ENCODE measurements at regions of chr16 and their contacts with region 1.

Region 1: GRCh38 chr16:67999985-68000384 is 701 bp upstream of the DPEP2 start:
- DNase-seq: peak in 3 of 14 experiments; percentile 6 to 34 (median 22)
- ATAC-seq: peak; percentile 11
- H3K4me3 ChIP-seq: peak overlapping the region; percentile 61
- H3K4me3 Mint-ChIP-seq: peak overlapping the region; percentile 86
- H3K27ac ChIP-seq: peak overlapping the region; percentile 48 to 83
- H3K27ac Mint-ChIP-seq: peak overlapping the region; percentile 93
- H3K4me1 ChIP-seq: peaks cover 70% of the 10 kb centered on the region
- H3K4me1 Mint-ChIP-seq: peaks cover 55% of the 10 kb centered on the region
- H3K27me3 ChIP-seq: no peaks in the 10 kb centered on the region
- H3K27me3 Mint-ChIP-seq: no peaks in the 10 kb centered on the region
- CTCF ChIP-seq: no peak

Region 2: DNA sequence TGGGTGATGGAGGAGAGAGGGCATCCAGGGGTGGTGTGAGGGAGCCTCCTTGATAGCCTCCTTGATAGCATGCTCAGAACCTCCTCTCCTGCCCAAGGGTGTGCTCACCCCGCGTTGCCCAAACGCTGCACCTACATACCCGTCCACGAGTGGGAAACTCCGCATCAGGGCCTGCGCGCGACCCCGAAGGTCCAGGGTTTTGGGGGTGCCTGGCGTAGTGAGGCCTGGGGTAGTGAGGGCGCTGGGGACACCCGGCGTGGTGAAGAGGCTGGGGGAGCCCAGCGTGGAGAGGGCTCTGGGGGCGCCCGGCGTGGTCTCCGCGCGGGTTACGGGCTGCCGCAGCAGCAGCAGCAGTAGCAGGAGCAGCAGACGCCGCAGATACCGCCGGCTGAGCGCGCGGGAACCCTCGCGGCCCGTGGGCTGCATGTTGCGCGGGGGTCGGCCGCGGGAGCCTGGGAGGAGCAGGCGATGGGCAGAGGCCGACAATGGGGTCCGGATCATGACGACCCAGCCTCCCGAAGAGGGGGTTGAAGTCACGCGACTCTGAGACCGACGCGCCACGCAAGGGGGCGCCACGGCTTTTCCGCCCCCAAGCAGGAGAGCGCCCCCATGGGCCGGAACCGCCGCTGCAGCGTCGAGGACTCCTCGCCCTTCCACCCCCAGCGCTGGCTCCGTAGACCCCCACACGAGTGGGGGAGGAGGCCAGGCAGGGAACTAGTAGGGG is 19.9 kb before region 1 on chr16 and contains the start of gene DPEP3:
- CTCF ChIA-PET with region 1: interaction called, 3 read pairs
- POLR2A ChIA-PET with region 1: interaction called, 27 read pairs
- intact Hi-C with region 1: no loop called
- DNase-seq: peak in 2 of 14 experiments; percentile 31 to 49
- ATAC-seq: no peak
- H3K4me3 ChIP-seq: no peak within 1 kb of the TSS
- H3K4me3 Mint-ChIP-seq: no peak within 1 kb of the TSS
- H3K27ac ChIP-seq: no peak within 1 kb of the TSS
- H3K27ac Mint-ChIP-seq: no peak within 1 kb of the TSS
- H3K4me1 ChIP-seq: peaks cover 23% of the 10 kb centered on the region
- H3K4me1 Mint-ChIP-seq: peaks cover 23% of the 10 kb centered on the region
- H3K27me3 ChIP-seq: no peaks in the 10 kb centered on the region
- H3K27me3 Mint-ChIP-seq: no peaks in the 10 kb centered on the region
- CTCF ChIP-seq: no peak
- total RNA-seq, gene DPEP3: 0.53 to 0.63 TPM

Region 3: DNA sequence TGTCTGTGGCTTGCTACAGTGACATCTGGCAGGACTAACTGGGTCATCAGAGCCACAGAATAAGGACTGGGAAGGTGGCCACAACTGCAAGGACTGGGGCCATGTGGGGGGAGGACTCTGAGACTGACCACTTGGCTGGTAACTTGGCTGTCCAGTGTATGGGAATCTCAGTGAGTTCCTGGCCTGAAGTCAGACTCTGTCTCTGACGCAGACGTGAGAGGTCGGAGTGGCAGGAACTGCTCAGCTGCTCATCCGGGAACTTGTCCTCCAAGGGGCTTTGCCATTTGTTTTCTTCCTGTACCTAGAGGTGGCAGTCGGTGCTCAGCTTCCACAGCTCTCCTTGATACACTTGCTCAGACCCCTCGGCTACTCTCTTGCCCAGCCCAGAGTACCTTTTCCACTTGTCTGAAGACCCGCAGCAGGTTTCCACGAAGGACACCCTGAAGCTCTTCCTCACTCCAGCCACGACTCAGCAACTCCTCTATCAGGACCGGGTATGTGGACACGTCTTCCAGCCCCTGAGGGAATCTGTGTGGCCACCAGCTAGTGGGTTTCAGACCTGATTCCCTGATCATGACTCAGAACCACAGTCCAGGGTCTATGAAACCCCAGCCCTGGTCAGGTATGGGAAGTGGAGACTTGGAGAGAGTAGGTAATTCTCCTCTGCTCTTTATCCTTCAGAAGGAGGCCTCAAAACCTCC is 12.4 kb before region 1 on chr16:
- CTCF ChIA-PET with region 1: interaction called, 3 read pairs
- POLR2A ChIA-PET with region 1: interaction called, 27 read pairs
- intact Hi-C with region 1: no loop called
- DNase-seq: no peak
- ATAC-seq: no peak
- H3K4me3 ChIP-seq: no peak overlapping the region
- H3K4me3 Mint-ChIP-seq: no peak overlapping the region
- H3K27ac ChIP-seq: peak overlapping the region in 1 of 2 donors; percentile 32
- H3K27ac Mint-ChIP-seq: peak overlapping the region; percentile 79
- H3K4me1 ChIP-seq: peaks cover 29% of the 10 kb centered on the region
- H3K4me1 Mint-ChIP-seq: peaks cover 32% of the 10 kb centered on the region
- H3K27me3 ChIP-seq: no peaks in the 10 kb centered on the region
- H3K27me3 Mint-ChIP-seq: no peaks in the 10 kb centered on the region
- CTCF ChIP-seq: no peak

Region 4: DNA sequence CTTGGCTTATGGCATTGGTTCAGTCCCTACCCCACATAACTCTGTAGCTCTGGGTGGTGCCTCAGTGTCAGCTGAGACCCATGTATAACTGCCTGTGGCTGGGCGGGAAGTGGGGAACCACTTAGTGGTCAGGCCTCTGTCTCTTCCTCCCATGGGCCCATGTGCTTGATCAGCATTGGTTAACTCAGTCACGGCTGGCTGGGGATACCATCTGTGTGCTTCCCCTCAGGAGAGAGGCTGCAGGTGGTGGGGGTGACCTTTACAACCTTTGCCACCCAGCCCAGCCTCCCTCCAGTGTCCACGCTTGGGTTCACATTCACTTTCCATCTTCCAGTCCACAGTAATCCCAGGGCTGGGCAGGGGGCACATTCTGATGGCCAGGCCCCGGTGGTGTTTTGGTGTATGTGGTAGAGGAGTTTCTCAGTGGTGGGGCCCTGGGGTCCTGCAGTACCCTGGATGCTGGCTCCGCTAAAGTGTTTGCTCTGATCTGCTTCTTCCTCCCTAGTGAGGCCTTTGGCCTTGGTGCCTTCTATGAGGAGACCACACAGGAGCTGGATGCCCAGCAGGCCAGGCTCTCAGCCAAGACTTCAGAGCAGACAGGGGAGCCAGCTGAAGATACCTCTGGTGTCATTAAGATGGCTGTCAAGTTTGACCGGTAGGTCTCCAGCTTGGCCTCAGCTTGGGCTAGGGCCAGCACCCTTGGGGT is 75.0 kb after region 1 on chr16:
- CTCF ChIA-PET with region 1: no interaction called
- POLR2A ChIA-PET with region 1: interaction called, 11 read pairs
- intact Hi-C with region 1: no loop called
- DNase-seq: peak in 11 of 14 experiments; percentile 24 to 92 (median 48)
- ATAC-seq: peak; percentile 51
- H3K4me3 ChIP-seq: no peak overlapping the region
- H3K4me3 Mint-ChIP-seq: peak overlapping the region; percentile 75
- H3K27ac ChIP-seq: peak overlapping the region in 1 of 2 donors; percentile 14
- H3K27ac Mint-ChIP-seq: peak overlapping the region; percentile 82
- H3K4me1 ChIP-seq: peaks cover 95% of the 10 kb centered on the region
- H3K4me1 Mint-ChIP-seq: peaks cover 87% of the 10 kb centered on the region
- H3K27me3 ChIP-seq: no peaks in the 10 kb centered on the region
- H3K27me3 Mint-ChIP-seq: no peaks in the 10 kb centered on the region
- CTCF ChIP-seq: no peak

Measured in CD4-positive, alpha-beta T cell (primary cell).